ENCODE measurements at regions of chr11 and their contacts with region 1.

Region 1: GRCh38 chr11:7555052-7555699 is 41.4 kb downstream of the PPFIBP2 start:
- DNase-seq: no peak
- ATAC-seq: no peak
- H3K4me3 ChIP-seq: no peak overlapping the region
- H3K27ac ChIP-seq: no peak overlapping the region
- H3K4me1 ChIP-seq: peaks cover 16% of the 10 kb centered on the region
- H3K27me3 ChIP-seq: no peaks in the 10 kb centered on the region
- CTCF ChIP-seq: no peak
- EP300 ChIP-seq: no peak
- POLR2A ChIP-seq: no peak
- RAD21 ChIP-seq: no peak

Region 2: DNA sequence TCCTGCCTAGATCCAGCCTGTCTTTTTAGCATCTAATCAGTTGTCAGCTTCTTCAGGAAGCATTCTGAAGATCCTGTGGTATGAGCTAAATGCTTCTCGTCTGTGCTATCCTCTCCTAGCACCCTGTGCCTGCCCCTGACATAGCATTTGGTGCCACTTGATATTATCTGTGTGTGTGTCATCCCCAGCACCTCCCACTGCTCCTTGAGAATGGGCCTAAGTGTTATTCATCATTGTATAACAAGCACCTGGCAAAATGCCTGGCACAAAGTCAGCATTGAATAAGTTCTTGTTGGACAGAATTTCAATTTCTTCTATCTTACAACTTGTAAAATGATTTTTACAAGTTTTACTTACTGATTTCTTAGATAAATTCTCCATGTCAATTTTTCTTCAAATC is 98.0 kb before region 1 on chr11:
- CTCF ChIA-PET with region 1: no interaction called
- POLR2A ChIA-PET with region 1: no interaction called
- RAD21 ChIA-PET with region 1: no interaction called
- SMC1A ChIA-PET with region 1: no interaction called
- in situ Hi-C with region 1: no loop called
- intact Hi-C with region 1: loop called (anchors 5 kb)
- DNase-seq: no peak
- ATAC-seq: no peak
- H3K4me3 ChIP-seq: no peak overlapping the region
- H3K27ac ChIP-seq: no peak overlapping the region
- H3K4me1 ChIP-seq: no peaks in the 10 kb centered on the region
- H3K27me3 ChIP-seq: no peaks in the 10 kb centered on the region
- CTCF ChIP-seq: no peak
- EP300 ChIP-seq: no peak
- POLR2A ChIP-seq: no peak
- RAD21 ChIP-seq: no peak

Region 3: GRCh38 chr11:7577291-7578190 is 22.4 kb after region 1 on chr11:
- CTCF ChIA-PET with region 1: interaction called, 4 read pairs
- POLR2A ChIA-PET with region 1: interaction called, 5 read pairs
- RAD21 ChIA-PET with region 1: interaction called, 11 read pairs
- SMC1A ChIA-PET with region 1: interaction called, 5 read pairs
- in situ Hi-C with region 1: no loop called
- intact Hi-C with region 1: no loop called
- DNase-seq: no peak
- ATAC-seq: no peak
- H3K4me3 ChIP-seq: no peak overlapping the region
- H3K27ac ChIP-seq: 0 out of 2 replicates have a peak overlapping the region, but pooled peaks have one; percentile 14
- H3K4me1 ChIP-seq: peaks cover 41% of the 10 kb centered on the region
- H3K27me3 ChIP-seq: no peaks in the 10 kb centered on the region
- CTCF ChIP-seq: no peak
- EP300 ChIP-seq: no peak
- POLR2A ChIP-seq: no peak
- RAD21 ChIP-seq: no peak

Measured in GM12878 (cell line).